ENCODE measurements at regions of chr12 and their contacts with region 1.

Region 1: GRCh38 chr12:111024205-111024801 is 103.9 kb upstream of the MYL2 start:
- DNase-seq: peak; percentile 61
- ATAC-seq: peak; percentile 76
- H3K4me3 Mint-ChIP-seq: no peak overlapping the region
- H3K27ac Mint-ChIP-seq: no peak overlapping the region
- H3K4me1 Mint-ChIP-seq: no peaks in the 10 kb centered on the region
- H3K27me3 Mint-ChIP-seq: peaks cover 19% of the 10 kb centered on the region

Region 2: GRCh38 chr12:111126331-111126730 is 102.0 kb after region 1 on chr12:
- CTCF ChIA-PET with region 1: no interaction called
- POLR2A ChIA-PET with region 1: no interaction called
- DNase-seq: no peak
- ATAC-seq: no peak
- H3K4me3 Mint-ChIP-seq: no peak overlapping the region
- H3K27ac Mint-ChIP-seq: no peak overlapping the region
- H3K4me1 Mint-ChIP-seq: no peaks in the 10 kb centered on the region
- H3K27me3 Mint-ChIP-seq: peaks cover 2% of the 10 kb centered on the region

Region 3: GRCh38 chr12:111271674-111272418 is 247.5 kb after region 1 on chr12:
- CTCF ChIA-PET with region 1: interaction called, 18 read pairs
- POLR2A ChIA-PET with region 1: no interaction called
- DNase-seq: peak; percentile 22
- ATAC-seq: no peak
- H3K4me3 Mint-ChIP-seq: no peak overlapping the region
- H3K27ac Mint-ChIP-seq: no peak overlapping the region
- H3K4me1 Mint-ChIP-seq: peaks cover 8% of the 10 kb centered on the region
- H3K27me3 Mint-ChIP-seq: peaks cover 12% of the 10 kb centered on the region